Naive thymus-derived CD4-positive, alpha-beta T cell (primary cell): ENCODE measurements at regions of chr1 and their contacts with region 1.

Region 1: DNA sequence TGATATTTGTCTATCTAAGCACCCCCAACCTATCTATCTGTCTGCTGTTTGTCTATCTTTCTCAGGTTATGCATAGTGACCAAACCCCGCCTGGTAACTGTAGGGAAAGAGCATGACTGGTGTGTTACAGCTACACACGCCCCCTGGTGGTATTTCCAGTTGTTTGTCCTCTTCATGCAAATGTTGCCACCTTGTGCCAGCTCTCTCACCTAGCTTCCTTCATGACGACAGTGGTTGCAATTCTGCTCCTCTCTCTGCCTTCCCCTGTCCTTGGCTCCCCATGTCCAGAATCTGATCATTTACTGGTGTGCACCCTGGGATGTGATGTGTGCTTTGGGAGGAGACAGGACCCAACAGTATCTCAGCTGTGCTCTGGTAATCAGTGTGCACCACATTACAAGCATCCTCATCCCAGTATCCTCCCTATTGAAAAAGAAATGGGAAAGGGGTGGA is 8.1 kb upstream of the INKA2 start:
- DNase-seq: peak in 8 of 9 donors; percentile 10 to 61 (median 43)
- ATAC-seq: peak; percentile 85
- H3K4me3 ChIP-seq: no peak overlapping the region
- H3K4me3 Mint-ChIP-seq: no peak overlapping the region
- H3K27ac ChIP-seq: no peak overlapping the region
- H3K27ac Mint-ChIP-seq: no peak overlapping the region
- H3K4me1 ChIP-seq: no peaks in the 10 kb centered on the region
- H3K4me1 Mint-ChIP-seq: peaks cover 0 to 21% (median 0%) of the 10 kb centered on the region in 7 donors
- H3K27me3 ChIP-seq: no peaks in the 10 kb centered on the region
- H3K27me3 Mint-ChIP-seq: peaks cover 0 to 23% (median 0%) of the 10 kb centered on the region in 5 donors

Region 2: DNA sequence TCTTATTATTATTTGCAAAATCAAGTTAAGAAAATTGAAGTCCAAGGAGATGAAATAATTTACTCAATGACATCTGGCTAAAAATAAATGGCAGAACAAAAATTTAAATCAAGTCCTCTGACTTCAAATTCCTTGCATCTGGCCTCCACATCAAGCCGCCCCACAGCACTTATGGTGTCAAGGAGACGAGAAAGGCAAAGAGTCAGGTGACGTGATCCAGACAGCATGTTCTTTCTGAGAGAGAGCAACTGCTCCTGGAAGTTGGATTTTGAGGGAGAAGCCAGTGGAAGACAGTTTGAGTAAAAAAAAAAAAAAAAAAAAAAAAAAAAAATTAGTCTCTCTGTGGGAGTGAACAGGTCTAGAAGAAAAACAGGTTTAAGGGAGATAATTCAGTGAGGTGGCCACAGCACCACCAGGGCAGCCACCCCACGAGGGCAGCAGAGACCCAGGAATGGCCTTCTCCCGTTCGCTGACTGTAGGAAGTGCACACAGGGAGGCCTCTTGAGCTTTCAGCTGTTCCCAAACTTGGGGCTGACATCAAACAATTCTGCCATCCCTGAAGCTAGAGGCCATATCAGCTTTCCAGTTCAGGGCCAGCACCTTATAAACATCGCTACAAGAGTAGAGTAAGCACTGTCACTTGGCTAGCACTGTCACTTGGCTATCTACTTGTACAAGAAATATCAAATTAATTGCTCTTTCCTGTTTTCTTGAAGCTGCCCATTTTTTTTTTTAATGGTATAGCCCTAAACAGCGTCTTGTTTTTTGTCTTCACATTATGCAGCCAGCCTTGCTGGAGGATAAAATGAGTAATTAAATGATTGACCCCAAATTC is 265.7 kb before region 1 on chr1:
- CTCF ChIA-PET with region 1: interaction called, 5 read pairs
- POLR2A ChIA-PET with region 1: no interaction called
- intact Hi-C with region 1: loop called (anchors 1 kb)
- DNase-seq: peak; percentile 23 to 65 (median 54)
- ATAC-seq: peak; percentile 80
- H3K4me3 ChIP-seq: no peak overlapping the region
- H3K4me3 Mint-ChIP-seq: peak overlapping the region in 1 of 10 donors; percentile 20
- H3K27ac ChIP-seq: no peak overlapping the region
- H3K27ac Mint-ChIP-seq: peak overlapping the region in 4 of 9 donors; percentile 22 to 86 (median 56)
- H3K4me1 ChIP-seq: peaks cover 22 to 25% of the 10 kb centered on the region in 2 donors
- H3K4me1 Mint-ChIP-seq: peaks cover 32 to 68% (median 53%) of the 10 kb centered on the region in 7 donors
- H3K27me3 ChIP-seq: no peaks in the 10 kb centered on the region
- H3K27me3 Mint-ChIP-seq: peaks cover 0 to 25% (median 0%) of the 10 kb centered on the region in 5 donors

Region 3: DNA sequence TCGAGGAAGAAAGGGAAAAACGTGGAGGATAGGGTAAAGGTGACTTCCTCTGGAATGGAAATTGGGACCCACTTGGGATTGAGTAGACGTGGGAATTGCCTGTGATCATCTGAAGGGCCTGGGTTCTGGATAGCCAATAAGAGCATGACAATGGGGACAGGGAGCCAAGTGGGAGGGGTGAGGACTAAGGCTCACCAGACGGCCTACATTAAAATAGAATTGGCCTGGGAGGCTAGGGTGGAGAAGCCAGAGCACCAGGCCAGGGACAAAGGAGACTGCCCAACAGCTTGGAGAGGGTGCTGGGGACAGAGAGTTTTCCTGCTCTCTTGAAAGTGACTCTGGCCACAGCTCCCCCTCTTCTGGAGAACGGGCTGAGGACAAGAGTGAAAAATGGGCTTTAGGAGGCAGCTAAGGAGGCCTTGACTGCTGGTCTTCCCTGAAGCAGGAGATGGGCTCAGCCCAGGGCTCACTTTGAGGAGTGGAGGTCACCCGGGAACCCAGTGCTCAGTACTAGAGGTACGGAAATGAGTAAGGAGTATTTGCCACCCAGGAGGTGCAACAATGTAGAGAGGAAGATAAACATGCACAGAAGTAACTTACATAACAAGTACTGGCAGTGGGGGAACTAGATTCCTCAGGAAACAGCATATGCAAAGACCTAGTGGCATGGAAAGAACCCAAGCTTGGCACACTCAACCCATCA is 26.9 kb before region 1 on chr1:
- CTCF ChIA-PET with region 1: interaction called, 18 read pairs
- POLR2A ChIA-PET with region 1: interaction called, 6 read pairs
- intact Hi-C with region 1: loop called (anchors 1 to 2 kb)
- DNase-seq: no peak
- ATAC-seq: no peak
- H3K4me3 ChIP-seq: no peak overlapping the region
- H3K4me3 Mint-ChIP-seq: no peak overlapping the region
- H3K27ac ChIP-seq: no peak overlapping the region
- H3K27ac Mint-ChIP-seq: peak overlapping the region in 7 of 9 donors; percentile 31 to 80 (median 52)
- H3K4me1 ChIP-seq: peaks cover 0 to 8% of the 10 kb centered on the region in 2 donors
- H3K4me1 Mint-ChIP-seq: peaks cover 9 to 31% (median 19%) of the 10 kb centered on the region in 7 donors
- H3K27me3 ChIP-seq: no peaks in the 10 kb centered on the region
- H3K27me3 Mint-ChIP-seq: no peaks in the 10 kb centered on the region